H1 (cell line): ENCODE measurements at regions of chr14 and their contacts with region 1.

Region 1: DNA sequence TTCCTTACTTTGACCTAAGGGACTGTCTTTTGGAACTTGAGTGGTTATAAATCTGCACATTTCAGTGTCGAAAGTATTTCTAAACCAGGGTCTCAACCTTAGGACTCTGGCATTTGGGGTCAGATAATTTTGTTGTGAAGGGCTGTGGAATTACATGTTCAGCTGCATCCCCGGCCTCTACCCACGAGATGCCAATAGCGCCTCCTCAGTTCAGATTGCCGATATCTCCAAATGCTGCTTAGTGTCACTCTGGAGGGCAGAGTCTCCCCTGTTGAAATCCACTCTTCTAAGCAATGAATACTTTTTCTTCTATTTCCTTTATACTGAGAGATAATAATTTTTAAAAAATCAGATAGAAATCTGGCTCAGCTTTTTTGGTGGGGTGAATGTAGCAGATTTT is 379.4 kb upstream of the RGS6 start:
- DNase-seq: no peak
- H3K4me3 ChIP-seq: no peak overlapping the region
- H3K27ac ChIP-seq: no peak overlapping the region
- H3K4me1 ChIP-seq: no peaks in the 10 kb centered on the region
- H3K27me3 ChIP-seq: no peaks in the 10 kb centered on the region
- CTCF ChIP-seq: peak; percentile 35 to 48 (median 46); a peak in 3 of 4 replicates
- EP300 ChIP-seq: no peak
- POLR2A ChIP-seq: no peak
- RAD21 ChIP-seq: peak; percentile 23 to 52; a peak in 3 of 4 replicates

Region 2: GRCh38 chr14:71563492-71564153 is 10.8 kb after region 1 on chr14:
- CTCF ChIA-PET with region 1: interaction called, 10 read pairs
- POLR2A ChIA-PET with region 1: no interaction called
- DNase-seq: no peak
- H3K4me3 ChIP-seq: no peak overlapping the region
- H3K27ac ChIP-seq: no peak overlapping the region
- H3K4me1 ChIP-seq: 0 out of 7 replicates have a peak, but pooled peaks cover 0 to 2% (median 0%) of the 10 kb centered on the region in 4 experiments
- H3K27me3 ChIP-seq: no peaks in the 10 kb centered on the region
- CTCF ChIP-seq: no peak
- EP300 ChIP-seq: no peak
- POLR2A ChIP-seq: no peak
- RAD21 ChIP-seq: no peak